ENCODE measurements at regions of chr11 and their contacts with region 1.

Region 1: DNA sequence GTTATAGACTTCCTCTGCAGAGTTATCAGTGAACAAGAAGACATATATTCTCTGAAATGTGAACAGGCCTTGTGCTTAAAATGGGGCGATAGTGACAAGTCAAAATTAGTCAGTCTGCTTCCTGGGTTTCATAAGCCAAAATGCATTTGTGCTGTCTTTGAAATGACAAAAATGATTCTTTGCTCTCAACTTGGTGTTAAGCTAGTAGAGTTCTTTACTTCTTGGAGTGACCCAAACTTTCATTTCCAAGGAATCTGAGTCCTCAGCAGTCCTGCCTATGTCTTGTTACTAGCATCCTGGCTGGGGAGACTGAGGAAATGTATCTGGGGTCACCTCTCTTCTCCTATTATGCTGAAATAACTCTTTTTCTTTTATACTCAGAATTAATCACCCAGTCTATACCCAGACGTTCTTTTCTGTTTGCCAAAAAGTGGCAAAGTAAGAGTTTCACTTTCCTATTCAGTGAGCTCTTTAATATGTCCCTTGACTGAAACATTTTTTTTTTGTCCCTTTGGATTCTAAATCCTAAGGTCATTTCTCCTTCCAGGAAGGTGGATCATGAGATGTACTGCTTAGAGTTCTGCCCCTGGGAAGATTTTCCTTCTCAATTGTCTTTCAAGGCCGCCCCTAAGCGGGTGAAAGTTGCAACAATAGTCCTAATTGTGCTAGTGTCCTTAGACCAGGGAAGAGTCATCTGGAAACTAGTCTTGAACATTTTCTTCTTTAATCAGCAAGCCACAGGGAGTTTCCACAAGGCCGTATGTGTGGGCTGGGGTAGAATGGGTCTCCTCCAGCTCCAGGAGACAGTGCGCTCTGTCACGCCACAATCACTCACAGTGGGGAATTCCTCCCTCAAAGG is 53.0 kb upstream of the RDX start:
- DNase-seq: peak; percentile 74
- H3K4me3 Mint-ChIP-seq: peak overlapping the region; percentile 62
- H3K27ac Mint-ChIP-seq: peak overlapping the region; percentile 98
- H3K4me1 Mint-ChIP-seq: peaks cover 83% of the 10 kb centered on the region
- H3K27me3 Mint-ChIP-seq: no peaks in the 10 kb centered on the region

Region 2: DNA sequence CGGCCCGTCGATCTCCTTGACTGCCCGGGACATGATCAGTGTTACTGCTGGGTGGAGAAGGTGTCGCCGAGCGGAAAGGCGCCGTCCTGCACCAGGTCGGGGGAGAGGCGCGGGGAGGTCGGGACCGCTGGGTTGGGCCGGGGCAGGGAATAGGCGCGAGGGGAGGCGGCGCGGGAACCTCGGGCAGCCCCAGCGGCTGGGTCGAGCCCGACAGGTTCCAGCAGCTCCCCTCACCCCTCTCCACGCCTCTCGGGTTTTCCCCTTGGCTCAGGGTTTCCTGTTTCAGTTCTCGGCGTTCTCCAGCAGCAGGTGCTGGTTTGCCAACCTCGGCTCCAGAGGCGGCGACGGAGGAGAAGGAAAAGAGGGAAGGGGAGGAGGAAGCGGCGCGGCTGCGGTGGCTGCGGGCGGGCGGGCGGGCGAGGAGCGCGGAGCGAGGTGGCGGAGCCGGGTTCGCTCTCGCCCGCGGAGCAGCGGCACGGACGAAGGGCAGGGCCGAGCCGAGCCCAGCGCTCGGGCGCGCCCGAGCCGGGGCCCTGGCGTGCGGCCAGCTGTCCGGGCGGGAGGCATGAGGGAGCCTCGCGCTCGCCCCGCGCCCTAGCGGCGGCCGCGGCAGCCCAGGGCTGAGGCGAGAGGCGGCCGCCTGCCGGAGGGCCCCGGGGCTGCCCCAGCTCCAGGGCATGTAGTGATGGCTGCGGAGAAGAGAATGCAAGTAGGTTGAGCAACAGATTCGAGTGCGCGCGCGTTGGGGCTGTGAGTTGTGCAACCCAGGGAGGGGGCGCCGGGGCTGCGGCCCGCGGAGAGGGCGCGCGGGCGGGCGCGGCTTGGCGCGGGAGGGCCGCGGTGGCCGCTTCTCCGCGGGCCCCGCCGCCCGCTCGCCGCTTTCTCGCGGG is 256.6 kb before region 1 on chr11 and contains the start of gene ZC3H12C:
- intact Hi-C with region 1: loop called (anchors 2 kb)
- DNase-seq: peak; percentile 47
- H3K4me3 Mint-ChIP-seq: peak within 1 kb of the TSS; percentile 87
- H3K27ac Mint-ChIP-seq: peak within 1 kb of the TSS; percentile 93
- H3K4me1 Mint-ChIP-seq: peaks cover 16% of the 10 kb centered on the region
- H3K27me3 Mint-ChIP-seq: peaks cover 56% of the 10 kb centered on the region
- total RNA-seq, gene ZC3H12C: 5.7 and 6.2 TPM in 2 replicates

Region 3: DNA sequence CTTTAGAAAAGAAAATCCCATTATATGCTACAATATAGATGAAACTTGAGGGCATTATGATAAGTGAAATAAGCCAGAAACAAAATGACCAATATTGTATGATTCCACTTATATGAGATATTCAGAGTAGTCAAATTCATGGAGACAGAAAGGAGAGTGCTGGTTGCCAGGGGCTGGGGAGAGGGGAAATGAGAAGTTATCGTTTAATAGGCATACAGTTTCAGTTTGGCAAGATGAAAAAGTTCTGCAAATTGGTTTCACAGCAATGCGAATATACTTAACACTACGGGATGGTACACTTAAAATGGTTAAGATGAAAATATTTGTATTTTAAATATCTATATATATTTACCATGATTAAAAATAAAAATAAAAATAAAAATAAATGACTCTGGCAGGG is 21.9 kb before region 1 on chr11:
- intact Hi-C with region 1: loop called (anchors 1 kb)
- DNase-seq: no peak
- H3K4me3 Mint-ChIP-seq: peak overlapping the region; percentile 96
- H3K27ac Mint-ChIP-seq: peak overlapping the region; percentile 98
- H3K4me1 Mint-ChIP-seq: peaks cover 49% of the 10 kb centered on the region
- H3K27me3 Mint-ChIP-seq: no peaks in the 10 kb centered on the region

Region 4: DNA sequence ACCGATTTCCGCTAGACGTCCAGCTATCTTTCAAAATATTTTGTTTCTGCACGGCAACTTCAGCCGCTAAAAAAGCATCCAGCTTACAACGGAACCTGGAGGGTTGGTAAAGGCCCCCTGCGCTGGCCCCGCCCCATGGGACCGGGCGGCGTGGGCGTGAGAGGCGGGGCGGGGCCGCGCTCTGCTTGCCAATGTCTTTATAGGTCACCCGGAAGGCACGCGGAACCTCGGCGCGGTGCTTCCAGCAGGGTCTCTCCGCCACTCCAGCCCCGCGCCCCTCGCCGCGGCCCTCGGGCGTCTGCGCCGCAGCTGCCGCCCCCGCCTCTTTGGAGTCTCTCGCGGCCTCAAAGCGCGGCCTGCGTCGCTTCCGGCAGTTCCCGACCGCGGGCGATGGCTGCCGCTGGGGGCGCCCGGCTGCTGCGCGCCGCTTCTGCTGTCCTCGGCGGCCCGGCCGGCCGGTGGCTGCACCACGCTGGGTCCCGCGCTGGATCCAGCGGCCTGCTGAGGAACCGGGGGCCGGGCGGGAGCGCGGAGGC is 80.4 kb after region 1 on chr11 and contains the start of gene FDX1:
- intact Hi-C with region 1: loop called (anchors 1 kb)
- DNase-seq: peak; percentile 82
- H3K4me3 Mint-ChIP-seq: peak within 1 kb of the TSS; percentile 99
- H3K27ac Mint-ChIP-seq: peak within 1 kb of the TSS; percentile 98
- H3K4me1 Mint-ChIP-seq: peaks cover 51% of the 10 kb centered on the region
- H3K27me3 Mint-ChIP-seq: no peaks in the 10 kb centered on the region
- total RNA-seq, gene FDX1: 14.2 and 15.9 TPM in 2 replicates

Region 5: DNA sequence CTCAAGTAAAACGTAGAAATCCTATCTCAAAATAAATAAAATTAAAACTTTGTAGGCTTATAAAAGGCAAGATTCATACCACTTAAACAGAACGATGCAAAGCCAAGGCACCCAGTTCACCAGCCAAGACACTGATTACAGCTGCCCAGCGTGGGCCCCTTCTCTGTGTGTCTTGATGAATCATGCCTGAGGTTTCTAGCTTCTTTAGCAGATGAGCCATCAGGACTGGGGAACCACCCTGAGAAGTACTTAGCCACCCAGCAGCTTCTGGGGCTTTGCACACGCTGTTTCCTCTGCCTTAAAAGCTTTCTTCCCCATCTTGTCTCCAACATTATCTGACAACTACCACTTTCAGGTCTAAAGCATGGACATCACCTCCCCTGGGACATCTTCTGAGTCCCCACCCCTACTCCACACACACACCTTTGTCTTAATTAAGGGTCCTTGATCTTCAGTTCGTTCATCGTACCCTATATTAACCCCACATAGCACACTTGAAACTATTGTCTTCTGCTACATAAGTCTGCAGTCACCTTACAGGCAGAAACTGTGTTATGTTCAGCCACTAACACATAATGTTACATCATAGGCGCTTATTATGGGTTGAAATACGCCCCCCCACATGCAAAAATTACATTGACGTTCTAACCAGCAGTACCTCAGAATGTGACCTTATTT is 1182.5 kb after region 1 on chr11:
- intact Hi-C with region 1: loop called (anchors 10 kb)
- DNase-seq: peak; percentile 52
- H3K4me3 Mint-ChIP-seq: no peak overlapping the region
- H3K27ac Mint-ChIP-seq: peak overlapping the region; percentile 56
- H3K4me1 Mint-ChIP-seq: peaks cover 31% of the 10 kb centered on the region
- H3K27me3 Mint-ChIP-seq: peaks cover 14% of the 10 kb centered on the region